PC-9 (cell line): ENCODE measurements at regions of chr19 and their contacts with region 1.

Region 1: GRCh38 chr19:7925171-7925851 is 624 bp downstream of the CTXN1 start:
- DNase-seq: peak; percentile 61 to 71
- H3K4me3 ChIP-seq: peak overlapping the region; percentile 67
- H3K27ac ChIP-seq: no peak overlapping the region
- H3K4me1 ChIP-seq: peaks cover 35% of the 10 kb centered on the region
- H3K27me3 ChIP-seq: no peaks in the 10 kb centered on the region
- CTCF ChIP-seq: peak; percentile 87

Region 2: DNA sequence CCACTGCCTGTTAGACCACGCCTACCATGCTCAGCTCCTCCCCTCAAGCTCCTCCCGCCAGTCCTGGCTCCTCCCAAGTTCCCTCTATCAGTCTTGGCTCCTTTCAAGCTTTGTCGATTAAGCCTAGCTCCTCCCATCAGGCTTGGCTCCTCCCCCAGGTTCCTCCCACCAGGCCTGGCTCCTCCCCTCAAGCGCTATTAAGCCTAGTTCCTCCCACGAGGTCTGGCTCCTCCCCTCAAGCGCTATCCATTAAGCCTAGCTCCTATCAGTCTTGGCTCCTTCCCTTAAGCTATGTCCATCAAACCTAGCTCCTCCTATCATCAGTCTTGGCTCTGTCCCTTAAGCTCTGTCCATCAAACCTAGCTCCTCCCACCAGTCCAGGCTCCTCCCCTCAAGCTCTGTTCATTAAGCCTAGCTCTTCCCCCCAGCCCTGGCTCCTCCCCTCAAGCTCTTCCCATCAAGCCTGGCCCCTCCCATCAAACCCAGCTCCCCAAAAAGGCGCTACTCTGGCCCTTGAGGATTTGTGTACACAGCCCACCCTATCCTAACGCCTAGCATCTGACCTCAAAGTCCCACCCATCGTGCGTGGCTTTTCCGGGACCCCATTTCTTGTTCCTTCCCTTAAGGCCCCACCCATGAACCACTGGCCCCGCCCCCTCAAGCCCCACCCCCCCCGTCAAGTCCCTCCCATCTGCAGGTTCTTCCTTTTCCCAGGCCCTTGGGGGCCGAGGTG is 319.7 kb before region 1 on chr19:
- CTCF ChIA-PET with region 1: interaction called, 12 read pairs
- POLR2A ChIA-PET with region 1: no interaction called
- intact Hi-C with region 1: no loop called
- DNase-seq: peak; percentile 17 to 79
- H3K4me3 ChIP-seq: no peak overlapping the region
- H3K27ac ChIP-seq: no peak overlapping the region
- H3K4me1 ChIP-seq: no peaks in the 10 kb centered on the region
- H3K27me3 ChIP-seq: no peaks in the 10 kb centered on the region
- CTCF ChIP-seq: no peak

Region 3: GRCh38 chr19:7787141-7787540 is 138.2 kb before region 1 on chr19:
- CTCF ChIA-PET with region 1: no interaction called
- POLR2A ChIA-PET with region 1: interaction called, 14 read pairs
- intact Hi-C with region 1: no loop called
- DNase-seq: no peak
- H3K4me3 ChIP-seq: no peak overlapping the region
- H3K27ac ChIP-seq: no peak overlapping the region
- H3K4me1 ChIP-seq: peaks cover 32% of the 10 kb centered on the region
- H3K27me3 ChIP-seq: no peaks in the 10 kb centered on the region
- CTCF ChIP-seq: no peak

Region 4: GRCh38 chr19:8001995-8002849 is 76.9 kb after region 1 on chr19:
- CTCF ChIA-PET with region 1: interaction called, 5 read pairs
- POLR2A ChIA-PET with region 1: interaction called, 37 read pairs
- intact Hi-C with region 1: no loop called
- DNase-seq: peak; percentile 76 to 84
- H3K4me3 ChIP-seq: peak overlapping the region; percentile 11; the same call in 1 of the 2 replicates
- H3K27ac ChIP-seq: 0 out of 2 replicates have a peak overlapping the region, but pooled peaks have one; percentile 2
- H3K4me1 ChIP-seq: peaks cover 30% of the 10 kb centered on the region
- H3K27me3 ChIP-seq: no peaks in the 10 kb centered on the region
- CTCF ChIP-seq: peak; percentile 99

Region 5: DNA sequence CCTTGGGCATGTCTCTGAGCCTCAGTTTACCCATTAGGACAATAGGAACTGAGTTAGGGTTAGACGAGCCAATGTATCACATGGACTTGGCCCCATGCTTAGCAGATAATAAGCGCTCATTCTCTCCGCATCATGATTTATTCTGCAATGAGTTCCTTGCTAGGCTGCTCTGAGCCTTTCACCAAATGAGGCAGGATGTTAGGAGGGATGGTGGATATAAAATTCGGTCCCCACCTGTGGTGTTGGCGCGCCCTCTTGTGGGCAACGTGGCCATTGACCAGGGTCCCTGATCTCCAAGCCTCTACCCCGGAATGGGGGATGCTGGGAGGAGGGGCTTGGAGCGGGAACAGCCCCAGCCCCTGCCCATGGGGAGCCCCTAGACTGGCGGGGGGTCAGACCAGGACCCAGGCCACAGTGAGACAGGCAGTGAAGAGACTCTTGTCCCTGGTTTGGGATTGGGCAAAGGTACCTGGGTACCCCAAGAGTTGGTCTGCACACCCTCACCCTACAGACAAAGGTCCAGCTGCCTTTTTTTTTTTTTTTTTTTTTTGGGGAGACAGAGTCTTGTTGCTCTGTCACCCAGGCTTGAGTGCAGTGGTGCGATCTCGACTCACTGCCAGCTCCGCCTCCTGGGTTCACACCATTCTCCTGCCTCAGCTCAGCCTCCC is 327.7 kb after region 1 on chr19:
- CTCF ChIA-PET with region 1: interaction called, 14 read pairs
- POLR2A ChIA-PET with region 1: no interaction called
- intact Hi-C with region 1: loop called (anchors 5 kb)
- DNase-seq: peak; percentile 65 to 79
- H3K4me3 ChIP-seq: no peak overlapping the region
- H3K27ac ChIP-seq: no peak overlapping the region
- H3K4me1 ChIP-seq: no peaks in the 10 kb centered on the region
- H3K27me3 ChIP-seq: no peaks in the 10 kb centered on the region
- CTCF ChIP-seq: peak; percentile 99